ENCODE measurements at regions of chr4 and their contacts with region 1.

Region 1: DNA sequence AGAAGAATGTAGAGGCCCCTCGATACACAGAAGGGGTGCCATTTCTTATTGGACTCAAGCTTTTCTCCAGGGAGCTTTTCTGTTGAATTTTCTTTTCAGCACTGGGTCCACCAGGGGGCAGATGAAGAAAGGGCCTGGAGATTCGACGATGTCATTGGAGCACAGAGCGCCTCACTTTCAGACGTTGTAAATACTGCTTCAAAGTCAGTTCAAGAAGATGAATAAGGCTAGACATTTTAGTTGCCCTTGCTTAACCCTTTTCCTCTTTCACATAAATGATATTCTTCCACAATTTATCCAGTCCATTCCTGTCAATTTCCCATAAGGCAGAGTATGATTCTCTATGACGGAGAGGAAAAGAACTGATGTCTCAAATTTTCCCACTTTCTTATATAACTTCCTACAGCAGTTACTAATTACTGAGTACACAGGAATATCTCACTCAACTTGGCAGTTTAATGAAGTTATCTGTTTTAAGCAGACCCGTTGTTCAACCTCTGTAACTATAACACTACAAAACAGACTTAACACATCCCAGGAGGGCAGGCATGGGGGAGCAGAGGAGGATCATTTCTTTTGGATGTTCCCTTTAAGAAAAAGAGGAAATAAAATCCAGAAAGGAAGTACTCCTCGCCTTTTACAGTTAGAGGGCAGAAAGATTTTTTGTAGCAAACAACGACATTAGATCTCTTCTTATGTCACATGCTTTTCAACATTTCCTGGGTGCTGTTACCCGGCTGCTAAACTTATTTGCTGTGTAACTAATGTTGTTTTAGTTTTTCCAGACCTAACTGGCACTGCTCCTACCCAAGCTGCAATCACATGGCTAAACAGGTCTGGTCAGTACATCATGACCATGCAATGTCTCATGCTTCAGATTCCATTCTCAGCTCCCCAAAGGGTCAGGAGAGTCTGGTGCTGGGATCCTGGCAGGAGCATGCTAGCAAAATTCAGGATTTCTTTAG is 12.2 kb upstream of the CENPU start:
- H3K4me3 Mint-ChIP-seq: peak overlapping the region; percentile 60
- H3K27ac Mint-ChIP-seq: peak overlapping the region; percentile 92
- H3K4me1 Mint-ChIP-seq: peaks cover 58% of the 10 kb centered on the region
- H3K27me3 Mint-ChIP-seq: no peaks in the 10 kb centered on the region

Region 2: DNA sequence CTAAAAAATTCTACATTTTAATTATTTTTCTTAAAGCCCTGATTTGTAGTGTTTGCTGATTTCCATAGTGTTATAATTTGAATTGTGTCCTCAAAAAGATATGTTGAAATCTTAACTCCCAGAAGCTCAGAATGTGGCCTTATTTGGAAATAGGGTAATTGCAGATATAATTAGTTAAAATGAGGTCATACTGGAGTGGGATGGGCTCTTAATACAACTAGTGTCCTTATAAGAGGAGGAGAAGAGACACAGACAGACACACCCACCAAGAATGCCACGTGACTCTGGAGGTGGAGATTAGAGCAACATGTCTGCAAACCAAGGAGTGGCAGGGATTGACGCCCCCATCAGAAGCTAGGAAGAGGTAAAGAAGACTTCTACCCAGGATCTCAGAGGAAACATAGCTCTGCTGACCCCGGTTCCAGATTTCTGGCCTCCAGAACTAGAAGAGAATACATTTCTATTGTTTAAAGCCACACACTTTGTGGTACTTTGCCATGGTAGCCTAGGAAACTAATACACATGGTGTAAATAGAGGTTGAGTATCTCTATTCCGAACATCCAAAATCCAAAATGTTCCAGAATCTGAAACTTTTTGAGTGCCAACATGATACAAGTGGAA is 201.2 kb before region 1 on chr4:
- intact Hi-C with region 1: loop called (anchors 10 kb)
- H3K4me3 Mint-ChIP-seq: no peak overlapping the region
- H3K27ac Mint-ChIP-seq: no peak overlapping the region
- H3K4me1 Mint-ChIP-seq: peaks cover 34% of the 10 kb centered on the region
- H3K27me3 Mint-ChIP-seq: no peaks in the 10 kb centered on the region

Region 3: GRCh38 chr4:184812651-184813181 is 66.6 kb after region 1 on chr4:
- intact Hi-C with region 1: loop called (anchors 5 kb)
- H3K4me3 Mint-ChIP-seq: no peak overlapping the region
- H3K27ac Mint-ChIP-seq: peak overlapping the region; percentile 67
- H3K4me1 Mint-ChIP-seq: peaks cover 91% of the 10 kb centered on the region
- H3K27me3 Mint-ChIP-seq: no peaks in the 10 kb centered on the region

Region 4: GRCh38 chr4:184851200-184851541 is 105.1 kb after region 1 on chr4:
- intact Hi-C with region 1: no loop called
- H3K4me3 Mint-ChIP-seq: no peak overlapping the region
- H3K27ac Mint-ChIP-seq: no peak overlapping the region
- H3K4me1 Mint-ChIP-seq: peaks cover 28% of the 10 kb centered on the region
- H3K27me3 Mint-ChIP-seq: no peaks in the 10 kb centered on the region

Region 5: GRCh38 chr4:185005216-185005819 is 259.2 kb after region 1 on chr4:
- intact Hi-C with region 1: loop called (anchors 2 kb)
- H3K4me3 Mint-ChIP-seq: peak overlapping the region; percentile 43
- H3K27ac Mint-ChIP-seq: no peak overlapping the region
- H3K4me1 Mint-ChIP-seq: peaks cover 12% of the 10 kb centered on the region
- H3K27me3 Mint-ChIP-seq: peaks cover 33% of the 10 kb centered on the region

Region 6: DNA sequence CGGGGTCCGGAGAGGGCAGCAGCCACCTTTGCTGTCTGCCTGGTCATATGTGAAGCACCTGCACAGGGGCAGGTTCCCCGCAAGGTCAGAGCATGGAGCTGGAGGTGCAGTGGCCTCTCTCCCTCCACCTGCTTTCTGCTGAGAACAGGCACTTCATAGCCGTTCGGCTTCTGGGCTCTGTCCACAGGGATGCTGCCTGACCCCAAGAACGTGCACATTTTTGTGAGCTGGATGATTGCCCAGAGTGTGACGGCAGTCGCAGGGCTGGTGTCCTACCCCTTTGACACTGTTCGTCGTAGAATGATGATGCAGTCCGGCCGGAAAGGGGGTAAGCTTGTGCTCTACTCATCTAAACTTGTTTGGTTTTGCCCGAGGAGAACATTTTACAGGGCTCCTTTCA is 399.5 kb after region 1 on chr4:
- intact Hi-C with region 1: no loop called
- H3K4me3 Mint-ChIP-seq: no peak overlapping the region
- H3K27ac Mint-ChIP-seq: no peak overlapping the region
- H3K4me1 Mint-ChIP-seq: peaks cover 5% of the 10 kb centered on the region
- H3K27me3 Mint-ChIP-seq: peaks cover 48% of the 10 kb centered on the region

Measured in dendritic cell treated with granulocyte-macrophage colony-stimulating factor and Interleukin-4, amounts not matched to agents 40 ng/mL and 50 ng/mL, for 4 days (primary cell).